AG04450 (cell line): ENCODE measurements at regions of chr1 and their contacts with region 1.

Region 1: DNA sequence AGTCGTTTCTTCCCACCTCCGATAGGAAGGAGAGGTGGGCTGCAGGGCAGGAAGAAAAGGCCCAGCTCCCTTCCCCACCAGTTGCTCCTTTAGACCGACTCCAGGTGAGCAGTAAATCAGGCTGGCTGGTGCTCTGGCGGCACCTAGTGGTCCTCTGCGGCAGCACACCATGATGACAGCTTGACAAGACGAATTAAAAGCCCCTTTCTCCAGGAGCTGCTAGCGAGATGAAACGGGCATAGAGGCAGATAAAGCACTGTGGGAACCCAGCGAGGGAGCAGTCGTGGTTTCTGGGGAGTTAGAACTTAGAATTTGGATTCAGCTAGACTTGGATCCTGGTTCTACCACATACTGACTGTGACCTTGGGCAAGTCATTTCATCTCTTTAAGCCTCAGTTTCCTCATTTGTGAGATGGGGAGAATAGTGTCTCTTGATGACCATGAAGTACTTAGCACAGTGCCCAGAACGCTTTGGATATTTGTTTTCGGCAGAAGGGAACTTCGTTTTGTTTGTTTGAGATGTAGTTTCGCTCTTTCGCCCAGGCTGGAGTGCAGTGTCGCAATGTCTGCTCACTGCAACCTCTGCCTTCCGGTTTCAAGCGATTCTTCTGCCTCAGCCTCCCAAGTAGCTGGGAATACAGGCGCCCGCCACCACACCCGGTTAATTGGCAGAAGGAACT is 21.8 kb upstream of the COL9A2 start:
- DNase-seq: peak; percentile 45
- H3K4me3 ChIP-seq: no peak overlapping the region; the same call in 1 of the 2 replicates
- H3K27ac ChIP-seq: no peak overlapping the region
- H3K27me3 ChIP-seq: peaks cover 4% of the 10 kb centered on the region
- CTCF ChIP-seq: peak; percentile 100

Region 2: GRCh38 chr1:40078512-40079333 is 260.2 kb before region 1 on chr1:
- CTCF ChIA-PET with region 1: interaction called, 50 read pairs
- POLR2A ChIA-PET with region 1: interaction called, 3 read pairs
- DNase-seq: peak; percentile 13
- H3K4me3 ChIP-seq: no peak overlapping the region
- H3K27ac ChIP-seq: no peak overlapping the region
- H3K27me3 ChIP-seq: no peaks in the 10 kb centered on the region
- CTCF ChIP-seq: peak; percentile 82

Region 3: DNA sequence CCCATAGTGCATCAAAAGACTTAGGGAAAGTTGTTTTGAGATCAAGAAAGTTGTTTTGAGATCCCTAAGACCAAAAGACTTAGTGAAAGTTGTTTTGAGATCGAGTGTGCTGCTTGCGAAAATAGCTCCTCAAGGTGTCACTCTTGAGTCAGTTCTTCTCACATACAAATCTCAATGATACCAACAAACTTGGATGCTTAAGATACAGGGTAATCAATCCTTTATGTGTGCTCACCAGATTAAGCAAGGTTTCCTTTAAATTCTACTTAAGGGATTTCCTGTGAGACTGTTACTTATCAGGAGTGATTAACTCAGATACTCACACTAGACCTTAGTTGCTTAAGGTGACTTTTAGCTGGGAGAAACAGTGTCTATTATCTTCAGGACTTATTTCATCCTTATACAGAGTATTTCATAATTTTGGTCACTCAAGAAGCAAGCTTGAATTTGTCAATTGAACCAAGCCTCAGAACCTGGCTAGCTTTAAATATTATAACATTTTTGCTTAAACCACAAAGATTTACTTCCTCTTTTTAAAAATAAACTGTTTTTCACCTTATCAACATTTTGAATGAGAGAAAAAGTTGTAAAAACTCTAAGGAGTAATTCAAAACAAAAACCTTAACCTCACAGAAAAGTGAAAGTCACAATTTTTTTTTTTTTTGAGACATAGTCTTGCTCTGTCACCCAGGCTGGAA is 185.7 kb before region 1 on chr1:
- CTCF ChIA-PET with region 1: interaction called, 283 read pairs
- POLR2A ChIA-PET with region 1: no interaction called
- DNase-seq: peak; percentile 23
- H3K4me3 ChIP-seq: no peak overlapping the region
- H3K27ac ChIP-seq: no peak overlapping the region
- H3K27me3 ChIP-seq: peaks cover 2% of the 10 kb centered on the region
- CTCF ChIP-seq: peak; percentile 80

Region 4: GRCh38 chr1:40204856-40205255 is 134.0 kb before region 1 on chr1:
- CTCF ChIA-PET with region 1: interaction called, 10 read pairs
- POLR2A ChIA-PET with region 1: no interaction called
- DNase-seq: no peak
- H3K4me3 ChIP-seq: no peak overlapping the region
- H3K27ac ChIP-seq: no peak overlapping the region
- H3K27me3 ChIP-seq: no peaks in the 10 kb centered on the region
- CTCF ChIP-seq: no peak

Region 5: GRCh38 chr1:40315239-40315794 is 23.6 kb before region 1 on chr1:
- CTCF ChIA-PET with region 1: interaction called, 53 read pairs
- POLR2A ChIA-PET with region 1: interaction called, 9 read pairs
- DNase-seq: peak; percentile 70
- H3K4me3 ChIP-seq: peak overlapping the region; percentile 32; the same call in 1 of the 2 replicates
- H3K27ac ChIP-seq: peak overlapping the region; percentile 52
- H3K27me3 ChIP-seq: peaks cover 33% of the 10 kb centered on the region
- CTCF ChIP-seq: peak; percentile 91

Region 6: GRCh38 chr1:40373338-40374283 is 34.7 kb after region 1 on chr1 and contains the start of gene SMAP2:
- CTCF ChIA-PET with region 1: interaction called, 13 read pairs
- POLR2A ChIA-PET with region 1: no interaction called
- DNase-seq: peak; percentile 83
- H3K4me3 ChIP-seq: peak within 1 kb of the TSS; percentile 94
- H3K27ac ChIP-seq: peak within 1 kb of the TSS; percentile 53
- H3K27me3 ChIP-seq: no peaks in the 10 kb centered on the region
- CTCF ChIP-seq: no peak
- polyA plus RNA-seq, gene SMAP2: 22.5 and 24.4 TPM in 2 replicates

Region 7: DNA sequence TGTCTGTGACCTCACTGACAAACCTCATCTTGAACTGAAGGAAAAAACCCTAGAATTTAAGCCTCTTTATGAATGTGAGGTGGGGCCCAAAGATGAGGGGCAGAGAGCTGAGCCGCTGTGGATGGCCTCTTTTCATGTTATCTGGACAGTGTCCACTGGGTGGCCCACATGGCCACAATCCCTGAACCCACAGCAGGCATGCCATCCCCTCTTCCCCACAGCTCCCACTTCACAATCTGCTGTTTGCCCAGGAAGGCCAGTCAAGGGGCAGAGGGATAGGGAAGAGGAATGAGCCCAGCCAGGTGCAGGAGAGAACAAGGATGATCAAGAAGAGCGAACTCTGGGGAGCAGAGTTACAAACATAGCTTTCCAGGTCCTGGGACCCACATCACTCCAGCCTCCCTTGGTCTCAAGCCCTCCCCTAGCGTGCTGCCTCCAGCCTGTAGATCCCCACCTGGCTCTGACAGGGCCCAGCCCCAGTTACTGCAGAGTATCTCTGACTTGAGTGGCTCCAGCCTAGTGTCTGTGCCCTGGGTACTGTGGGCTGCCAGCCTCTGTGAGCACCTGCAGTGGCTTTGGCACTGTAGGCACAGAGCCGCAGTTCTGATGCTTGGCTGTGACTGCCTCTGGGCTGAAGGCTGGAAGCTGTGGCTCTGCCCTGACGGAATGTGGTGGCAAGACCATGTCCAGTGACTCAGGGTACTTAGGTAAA is 684.5 kb after region 1 on chr1:
- CTCF ChIA-PET with region 1: no interaction called
- POLR2A ChIA-PET with region 1: no interaction called
- DNase-seq: no peak
- H3K4me3 ChIP-seq: no peak overlapping the region
- H3K27ac ChIP-seq: no peak overlapping the region
- H3K27me3 ChIP-seq: no peaks in the 10 kb centered on the region
- CTCF ChIP-seq: peak; percentile 48